RWPE1 (cell line): ENCODE measurements at regions of chr10 and their contacts with region 1.

Region 1: DNA sequence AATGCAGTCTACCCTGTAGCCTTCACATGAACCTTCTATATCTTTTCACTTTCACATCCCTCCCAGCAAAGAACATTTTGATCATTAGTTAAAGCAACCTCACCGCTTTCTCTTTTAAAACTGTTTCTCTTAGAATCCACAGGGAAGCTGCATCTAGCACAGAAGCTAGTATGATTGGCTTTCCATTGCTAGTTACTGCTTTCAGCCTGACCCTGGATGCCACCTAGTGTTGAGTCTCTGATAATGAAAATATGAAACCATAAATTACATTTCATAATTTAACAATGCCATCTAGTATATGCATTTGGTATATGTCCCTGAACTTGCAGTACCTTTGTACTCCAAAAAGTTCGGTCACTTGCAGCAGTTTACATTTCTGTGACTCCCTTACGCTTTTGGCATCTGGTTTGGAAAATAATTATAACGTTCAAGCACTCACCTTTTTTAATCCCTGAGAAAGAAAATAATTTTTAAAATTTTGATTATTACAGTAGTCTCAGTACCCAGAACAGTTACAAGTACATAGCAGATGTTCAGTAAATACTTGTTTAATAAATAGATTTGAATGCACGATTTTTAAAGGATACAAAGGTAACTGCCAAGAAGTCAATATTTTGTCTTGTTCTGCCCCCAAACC is 22.7 kb downstream of the CISD1 start:
- DNase-seq: peak; percentile 23
- H3K27ac ChIP-seq: no peak overlapping the region
- CTCF ChIP-seq: peak; percentile 78

Region 2: DNA sequence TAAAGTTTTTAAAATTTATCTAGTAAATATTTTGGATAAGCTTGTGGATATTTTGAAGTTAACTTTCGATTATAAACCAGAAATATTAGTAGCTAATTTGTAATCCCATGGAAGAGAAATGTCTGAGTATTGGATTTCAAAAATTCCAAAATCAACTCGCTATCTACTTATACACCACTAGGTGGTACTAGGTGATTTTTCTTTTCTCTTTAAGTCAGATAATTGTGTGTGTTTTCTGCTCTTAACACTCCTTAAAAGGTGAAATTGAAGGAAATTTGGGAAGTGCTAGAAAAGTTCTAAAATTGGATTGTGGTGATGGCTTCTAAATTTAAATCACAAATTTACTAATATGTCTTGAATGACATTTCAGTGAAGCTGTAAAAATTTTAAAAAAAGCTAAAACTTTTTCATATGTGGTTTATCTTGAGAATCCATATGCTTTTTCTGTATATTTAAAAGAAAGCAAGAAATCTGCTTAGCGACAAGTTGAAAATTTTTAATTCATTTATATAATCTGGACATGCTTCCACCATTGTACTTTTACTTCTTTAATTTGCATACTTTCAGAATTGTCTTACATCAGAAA is 114.2 kb before region 1 on chr10:
- CTCF ChIA-PET with region 1: interaction called, 33 read pairs
- POLR2A ChIA-PET with region 1: no interaction called
- DNase-seq: no peak
- H3K27ac ChIP-seq: no peak overlapping the region
- CTCF ChIP-seq: peak; percentile 75

Region 3: DNA sequence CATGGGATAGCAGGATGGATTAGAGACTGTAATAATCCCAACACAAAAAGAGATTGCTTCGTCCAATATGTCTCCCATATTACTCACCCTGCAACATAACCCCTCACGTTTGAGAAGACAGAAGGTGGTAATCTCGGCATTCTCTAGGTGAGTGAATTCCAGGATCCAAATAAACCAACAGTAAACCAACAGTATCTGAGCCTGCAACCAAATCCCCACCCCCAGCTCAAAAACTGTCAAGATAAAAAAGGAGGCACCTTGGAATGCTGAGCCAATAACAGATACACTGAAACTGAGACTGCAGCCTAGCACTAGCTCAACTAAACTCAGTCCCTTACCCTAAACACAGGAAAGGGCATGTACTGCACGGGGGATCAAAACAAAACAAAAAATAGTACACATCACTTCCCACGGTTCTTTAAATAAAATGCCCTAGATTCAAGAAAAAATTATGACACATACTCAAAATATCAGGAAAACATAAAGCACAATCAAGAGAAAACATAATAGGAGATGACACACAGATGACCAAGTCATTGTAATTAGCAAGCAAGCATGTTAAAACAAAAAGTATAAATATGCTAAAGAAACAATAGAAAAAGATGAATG is 52.0 kb before region 1 on chr10:
- CTCF ChIA-PET with region 1: no interaction called
- POLR2A ChIA-PET with region 1: no interaction called
- DNase-seq: peak; percentile 31
- H3K27ac ChIP-seq: no peak overlapping the region
- CTCF ChIP-seq: no peak

Region 4: DNA sequence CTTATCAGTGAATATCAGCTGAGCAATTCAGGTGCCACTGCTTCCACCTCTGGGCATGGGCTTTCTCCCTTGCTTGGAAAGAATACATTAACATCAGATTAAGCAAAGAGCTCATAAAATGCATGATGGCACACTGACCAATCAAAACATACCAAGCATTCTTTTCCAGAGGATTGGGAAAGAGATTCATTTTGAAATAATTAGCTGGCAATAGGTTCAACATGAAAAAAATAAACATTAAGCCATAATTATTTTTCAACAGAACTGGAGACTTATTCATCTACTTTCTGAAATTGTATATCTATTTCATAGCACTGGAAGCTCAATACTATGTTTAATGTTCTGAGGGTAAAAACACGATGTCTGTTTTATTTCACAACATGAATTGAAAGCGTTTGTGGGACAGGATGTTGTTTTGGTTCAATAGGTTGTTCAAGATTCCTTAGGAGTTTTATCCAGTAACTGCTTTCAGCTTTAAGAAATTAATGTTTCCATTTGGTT is 146.8 kb after region 1 on chr10:
- CTCF ChIA-PET with region 1: no interaction called
- POLR2A ChIA-PET with region 1: no interaction called
- DNase-seq: peak; percentile 34
- H3K27ac ChIP-seq: no peak overlapping the region
- CTCF ChIP-seq: no peak